Left colon (tissue), 2 donors: ENCODE measurements at regions of chr3 and their contacts with region 1.

Region 1: GRCh38 chr3:45236964-45237363 is 10.9 kb upstream of the TMEM158 start:
- DNase-seq: no peak
- ATAC-seq: no peak

Region 2: DNA sequence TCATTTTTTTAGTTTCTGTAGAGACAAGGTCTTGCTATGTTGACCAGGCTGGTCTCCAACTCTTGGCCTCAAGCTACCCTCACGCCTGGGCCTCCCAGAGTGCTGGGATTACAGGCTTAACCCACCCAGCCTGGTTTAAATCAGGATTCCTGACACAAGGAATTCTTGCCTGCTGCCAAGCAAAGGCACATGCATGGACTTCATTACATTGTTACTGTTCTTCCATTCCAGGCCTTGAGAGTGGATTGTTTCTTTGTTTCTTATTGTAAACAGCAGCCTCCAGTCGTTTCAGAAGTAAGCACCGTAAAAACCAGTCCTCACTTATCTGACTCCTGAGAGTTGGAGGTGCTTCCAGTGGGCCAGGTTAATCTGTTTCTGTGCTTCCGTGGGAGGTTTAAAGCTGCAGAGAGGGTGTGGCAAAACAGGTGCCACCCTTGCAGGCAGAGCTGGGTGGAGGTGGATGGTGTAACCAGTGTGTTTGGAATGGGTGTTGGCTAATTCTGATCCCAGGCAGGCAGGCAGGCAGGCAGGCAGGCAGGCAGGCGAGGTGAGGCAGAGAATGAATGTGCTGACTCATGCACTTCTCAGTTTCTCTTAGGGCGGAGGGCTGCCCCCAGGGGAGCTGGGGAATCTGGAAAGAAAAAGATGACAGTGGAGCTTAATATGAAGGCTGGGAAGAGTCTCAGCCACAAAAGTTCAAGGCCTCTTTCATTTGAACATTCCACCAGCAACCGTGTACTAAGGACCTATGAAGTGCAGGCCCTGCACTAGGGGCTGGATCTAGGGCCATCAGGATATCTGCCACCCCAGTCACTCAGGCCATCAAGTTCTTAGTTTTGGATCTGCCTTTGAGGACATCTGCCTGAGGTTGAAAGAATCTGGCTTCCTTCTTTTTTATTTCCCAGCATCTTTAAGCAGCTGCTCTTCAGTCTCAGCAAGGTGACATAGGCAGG is 53.8 kb before region 1 on chr3:
- intact Hi-C with region 1: no loop called
- DNase-seq: peak; percentile 70 to 87
- ATAC-seq: peak; percentile 93

Region 3: DNA sequence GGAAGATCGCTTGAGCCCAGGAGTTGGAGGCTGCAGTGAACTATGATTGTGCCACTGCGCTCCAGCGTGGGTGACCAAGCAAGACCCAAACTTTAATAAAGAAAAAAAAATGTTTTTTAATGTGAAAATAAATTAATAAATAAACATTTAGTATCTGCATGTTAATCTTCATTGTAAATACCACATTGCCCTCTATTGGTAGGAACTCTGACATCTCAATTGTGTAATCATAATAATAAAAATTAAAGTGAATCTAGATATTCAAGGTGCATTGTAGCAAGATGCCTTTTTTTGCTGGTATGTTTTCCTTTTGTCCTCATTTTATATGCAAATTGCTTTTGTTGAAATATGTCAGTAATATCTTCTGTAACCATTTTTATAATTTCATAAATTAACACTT is 262.6 kb after region 1 on chr3:
- intact Hi-C with region 1: loop called in 1 of 2 experiments (anchors 10 kb)
- DNase-seq: no peak
- ATAC-seq: peak; percentile 47